ENCODE measurements at regions of chr16 and their contacts with region 1.

Region 1: GRCh38 chr16:11742539-11743307 is at the start of gene TXNDC11:
- DNase-seq: peak; percentile 99 to 100 (median 99)
- ATAC-seq: peak; percentile 96
- H3K4me3 ChIP-seq: peak within 1 kb of the TSS; percentile 63 to 78
- H3K4me3 Mint-ChIP-seq: peak within 1 kb of the TSS; percentile 95
- H3K27ac ChIP-seq: peak within 1 kb of the TSS; percentile 79 to 95
- H3K27ac Mint-ChIP-seq: peak within 1 kb of the TSS; percentile 98
- H3K4me1 ChIP-seq: peaks cover 30% of the 10 kb centered on the region
- H3K4me1 Mint-ChIP-seq: peaks cover 48% of the 10 kb centered on the region
- H3K27me3 ChIP-seq: no peaks in the 10 kb centered on the region
- H3K27me3 Mint-ChIP-seq: no peaks in the 10 kb centered on the region
- CTCF ChIP-seq: no peak
- total RNA-seq, gene TXNDC11: 118 to 130 TPM

Region 2: DNA sequence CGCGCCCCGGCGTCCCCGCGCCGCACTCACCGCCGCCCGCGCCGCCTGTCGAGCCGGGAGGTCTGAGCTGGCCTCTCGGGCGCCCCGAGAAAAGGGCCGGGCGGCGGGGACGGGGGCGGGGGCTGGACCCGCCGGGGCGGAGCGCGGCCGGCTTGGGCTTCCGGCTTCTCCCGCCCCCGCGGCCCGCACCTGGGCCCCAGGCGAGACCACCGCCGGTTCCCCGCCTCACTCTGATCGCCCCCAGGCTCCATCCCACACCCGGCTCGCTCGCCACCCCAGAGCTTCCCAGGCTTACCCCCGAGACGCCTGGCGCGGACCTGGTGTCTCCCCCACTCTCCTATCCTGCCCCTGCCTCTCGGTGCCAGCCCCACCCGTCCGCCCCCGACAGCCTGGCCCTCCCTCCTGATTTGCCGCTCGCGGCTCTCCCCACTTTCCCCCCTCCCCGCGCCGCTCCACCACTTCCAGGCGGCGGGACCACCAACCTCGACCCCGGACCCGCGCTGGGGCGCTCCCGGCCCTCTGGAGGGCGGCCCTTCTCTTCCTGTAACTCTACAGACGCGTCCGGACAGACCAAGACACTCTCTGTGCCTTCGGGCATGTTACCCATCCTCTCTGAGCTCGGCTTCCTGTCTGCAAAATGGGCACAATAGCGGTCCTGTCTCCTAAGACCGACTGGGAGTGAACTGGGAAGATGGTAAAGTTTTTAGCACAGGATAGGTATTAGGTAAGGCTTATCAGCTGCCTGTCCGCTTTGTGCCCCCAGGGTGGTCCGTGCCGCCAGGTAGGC is 155.7 kb before region 1 on chr16 and contains the start of gene LITAF:
- CTCF ChIA-PET with region 1: no interaction called
- POLR2A ChIA-PET with region 1: no interaction called
- intact Hi-C with region 1: loop called in 1 of 2 experiments (anchors 5 kb)
- DNase-seq: peak in 8 of 9 experiments; percentile 34 to 82 (median 67)
- ATAC-seq: peak; percentile 59
- H3K4me3 ChIP-seq: peak within 1 kb of the TSS; percentile 71 to 93
- H3K4me3 Mint-ChIP-seq: peak within 1 kb of the TSS; percentile 97
- H3K27ac ChIP-seq: peak within 1 kb of the TSS; percentile 72 to 89
- H3K27ac Mint-ChIP-seq: peak within 1 kb of the TSS; percentile 98
- H3K4me1 ChIP-seq: peaks cover 33% of the 10 kb centered on the region
- H3K4me1 Mint-ChIP-seq: peaks cover 41% of the 10 kb centered on the region
- H3K27me3 ChIP-seq: no peaks in the 10 kb centered on the region
- H3K27me3 Mint-ChIP-seq: no peaks in the 10 kb centered on the region
- CTCF ChIP-seq: no peak
- total RNA-seq, gene LITAF: 543 TPM

Region 3: DNA sequence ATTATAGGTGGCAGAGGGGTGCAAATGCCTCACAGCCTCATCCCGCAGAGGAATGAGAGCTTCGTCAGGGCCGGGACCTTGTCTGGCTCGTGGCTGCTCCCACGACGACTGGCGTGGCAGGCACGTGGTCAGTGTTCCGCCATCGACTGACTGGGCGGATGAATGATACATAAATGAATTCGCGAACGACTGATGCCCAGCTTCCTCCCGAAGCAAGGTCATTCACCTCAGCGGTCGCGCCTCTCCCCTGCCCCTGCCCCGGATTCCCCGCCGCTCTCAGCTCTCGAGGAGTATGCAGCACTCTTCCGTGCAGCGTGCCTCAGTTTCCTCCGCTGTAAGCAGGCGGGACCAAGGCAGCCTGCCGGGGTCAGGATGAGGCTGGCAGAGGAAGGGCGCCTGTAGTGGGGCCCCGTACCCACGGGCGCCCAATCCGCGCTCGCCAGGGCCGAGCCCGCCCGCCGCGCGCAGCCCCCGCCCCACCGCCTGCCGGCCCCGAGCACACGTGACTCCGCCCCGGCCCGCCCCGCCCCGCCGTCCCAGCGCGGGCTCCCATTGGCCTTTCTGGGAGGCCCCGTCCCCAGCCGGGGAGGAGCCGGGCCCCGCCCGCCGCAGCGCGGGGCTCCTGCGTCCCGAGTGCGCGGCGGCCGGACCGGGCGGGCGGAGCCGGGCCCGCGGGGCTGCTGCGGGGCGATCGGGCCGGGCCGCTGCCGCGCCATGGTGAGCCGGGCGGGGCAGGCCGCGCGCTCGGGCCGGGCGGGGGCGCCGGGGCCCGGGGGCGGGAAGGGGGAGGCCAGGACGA is 74.7 kb before region 1 on chr16 and contains the start of gene SNN:
- CTCF ChIA-PET with region 1: no interaction called
- POLR2A ChIA-PET with region 1: no interaction called
- intact Hi-C with region 1: loop called (anchors 2 to 5 kb)
- DNase-seq: peak; percentile 69 to 91 (median 83)
- ATAC-seq: peak; percentile 81
- H3K4me3 ChIP-seq: peak within 1 kb of the TSS; percentile 51 to 59
- H3K4me3 Mint-ChIP-seq: peak within 1 kb of the TSS; percentile 85
- H3K27ac ChIP-seq: peak within 1 kb of the TSS; percentile 62 to 70
- H3K27ac Mint-ChIP-seq: peak within 1 kb of the TSS; percentile 97
- H3K4me1 ChIP-seq: peaks cover 86% of the 10 kb centered on the region
- H3K4me1 Mint-ChIP-seq: peaks cover 78% of the 10 kb centered on the region
- H3K27me3 ChIP-seq: no peaks in the 10 kb centered on the region
- H3K27me3 Mint-ChIP-seq: no peaks in the 10 kb centered on the region
- CTCF ChIP-seq: no peak
- total RNA-seq, gene SNN: 105 to 107 TPM

Region 4: DNA sequence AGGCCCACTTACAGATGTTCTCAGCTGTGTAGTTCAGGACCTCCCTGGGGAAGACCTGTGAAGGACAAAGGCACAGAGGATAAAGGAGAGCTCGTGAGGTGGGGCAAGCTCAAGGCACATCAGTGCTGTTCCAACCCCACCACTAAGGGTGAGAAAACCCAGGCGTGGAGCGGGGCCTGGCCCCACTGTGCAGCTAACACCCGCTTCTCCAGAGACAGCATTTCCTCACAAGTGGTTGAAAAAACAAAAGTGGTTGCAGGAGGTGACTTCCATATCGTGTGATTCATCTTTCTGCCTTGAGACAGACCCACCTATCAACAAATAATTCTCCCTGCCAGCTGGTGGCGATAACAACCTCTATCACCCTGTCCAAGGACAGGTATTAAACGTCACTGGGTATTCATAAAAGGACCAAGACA is 44.4 kb before region 1 on chr16:
- CTCF ChIA-PET with region 1: no interaction called
- POLR2A ChIA-PET with region 1: no interaction called
- intact Hi-C with region 1: no loop called
- DNase-seq: peak in 2 of 9 experiments; percentile 46 to 75
- ATAC-seq: peak; percentile 63
- H3K4me3 ChIP-seq: no peak overlapping the region
- H3K4me3 Mint-ChIP-seq: no peak overlapping the region
- H3K27ac ChIP-seq: no peak overlapping the region
- H3K27ac Mint-ChIP-seq: peak overlapping the region; percentile 45
- H3K4me1 ChIP-seq: peaks cover 12% of the 10 kb centered on the region
- H3K4me1 Mint-ChIP-seq: peaks cover 36% of the 10 kb centered on the region
- H3K27me3 ChIP-seq: no peaks in the 10 kb centered on the region
- H3K27me3 Mint-ChIP-seq: no peaks in the 10 kb centered on the region
- CTCF ChIP-seq: no peak

Region 5: DNA sequence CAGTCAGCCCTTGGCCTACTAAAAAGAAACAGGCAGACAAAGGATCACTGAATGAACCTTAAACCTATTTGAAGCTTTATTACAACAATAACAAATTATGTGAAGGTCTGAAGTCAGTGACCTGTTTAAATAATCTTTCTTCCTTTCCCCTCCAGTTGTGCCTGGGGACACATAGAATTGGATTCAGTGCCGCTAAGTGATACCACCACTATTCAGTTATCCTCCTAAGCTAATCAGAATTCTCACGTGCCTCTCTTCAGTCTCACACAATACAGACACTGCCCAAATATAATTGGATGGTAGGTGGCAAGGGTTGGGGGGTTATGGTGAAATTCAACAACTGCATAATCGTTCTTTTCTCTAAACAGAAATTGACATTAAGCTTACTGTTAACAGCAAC is 11.5 kb before region 1 on chr16:
- CTCF ChIA-PET with region 1: no interaction called
- POLR2A ChIA-PET with region 1: interaction called, 21 read pairs
- intact Hi-C with region 1: no loop called
- DNase-seq: no peak
- ATAC-seq: no peak
- H3K4me3 ChIP-seq: no peak overlapping the region
- H3K4me3 Mint-ChIP-seq: no peak overlapping the region
- H3K27ac ChIP-seq: no peak overlapping the region
- H3K27ac Mint-ChIP-seq: no peak overlapping the region
- H3K4me1 ChIP-seq: no peaks in the 10 kb centered on the region
- H3K4me1 Mint-ChIP-seq: peaks cover 32% of the 10 kb centered on the region
- H3K27me3 ChIP-seq: no peaks in the 10 kb centered on the region
- H3K27me3 Mint-ChIP-seq: no peaks in the 10 kb centered on the region
- CTCF ChIP-seq: no peak

Region 6: DNA sequence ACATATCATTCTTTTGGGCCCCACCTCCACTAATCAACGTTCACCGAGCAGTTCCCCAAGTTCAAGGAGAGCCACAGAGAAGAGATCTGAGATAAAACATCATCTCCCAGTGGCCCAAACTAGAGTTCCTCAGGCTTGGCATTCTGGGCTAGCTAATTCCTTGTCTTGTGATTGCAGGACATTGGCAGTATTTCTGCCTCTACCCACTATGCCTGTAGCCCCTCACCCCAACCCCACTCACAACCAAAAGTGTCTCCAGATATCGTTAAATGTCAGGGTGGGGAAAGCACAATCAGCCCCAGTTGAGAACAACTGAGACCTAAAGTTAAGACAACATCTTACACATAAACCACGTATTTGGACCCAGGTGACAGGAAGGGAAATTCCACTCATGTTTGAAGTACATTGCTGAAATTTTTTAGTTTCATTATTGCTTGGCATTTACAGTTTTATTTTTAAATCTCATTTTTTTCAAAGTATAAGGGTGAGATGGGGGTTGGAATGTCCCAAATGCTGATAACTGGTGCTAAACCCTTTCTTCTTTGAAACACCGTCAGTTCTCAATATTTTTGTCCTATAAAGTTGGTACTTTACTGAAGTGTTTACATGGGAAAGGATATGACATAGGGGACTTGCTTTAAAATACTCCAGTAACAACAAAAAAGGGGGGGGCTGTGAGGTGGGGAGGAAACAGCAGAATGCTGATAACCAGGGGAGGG is 40.8 kb after region 1 on chr16:
- CTCF ChIA-PET with region 1: interaction called, 3 read pairs
- POLR2A ChIA-PET with region 1: interaction called, 5 read pairs
- intact Hi-C with region 1: loop called (anchors 1 to 5 kb)
- DNase-seq: peak in 6 of 9 experiments; percentile 17 to 93 (median 54)
- ATAC-seq: peak; percentile 81
- H3K4me3 ChIP-seq: peak overlapping the region; percentile 32 to 36
- H3K4me3 Mint-ChIP-seq: peak overlapping the region; percentile 78
- H3K27ac ChIP-seq: peak overlapping the region; percentile 82 to 96
- H3K27ac Mint-ChIP-seq: peak overlapping the region; percentile 99
- H3K4me1 ChIP-seq: peaks cover 51% of the 10 kb centered on the region
- H3K4me1 Mint-ChIP-seq: peaks cover 57% of the 10 kb centered on the region
- H3K27me3 ChIP-seq: no peaks in the 10 kb centered on the region
- H3K27me3 Mint-ChIP-seq: no peaks in the 10 kb centered on the region
- CTCF ChIP-seq: no peak

Region 7: GRCh38 chr16:11915644-11916523 is 173.2 kb after region 1 on chr16 and contains the start of gene GSPT1:
- CTCF ChIA-PET with region 1: no interaction called
- POLR2A ChIA-PET with region 1: no interaction called
- intact Hi-C with region 1: loop called (anchors 1 to 2 kb)
- DNase-seq: peak; percentile 98 to 100 (median 99)
- ATAC-seq: peak; percentile 89
- H3K4me3 ChIP-seq: peak within 1 kb of the TSS; percentile 52 to 68
- H3K4me3 Mint-ChIP-seq: peak within 1 kb of the TSS; percentile 94
- H3K27ac ChIP-seq: peak within 1 kb of the TSS; percentile 68 to 75
- H3K27ac Mint-ChIP-seq: peak within 1 kb of the TSS; percentile 98
- H3K4me1 ChIP-seq: peaks cover 24% of the 10 kb centered on the region
- H3K4me1 Mint-ChIP-seq: peaks cover 29% of the 10 kb centered on the region
- H3K27me3 ChIP-seq: no peaks in the 10 kb centered on the region
- H3K27me3 Mint-ChIP-seq: no peaks in the 10 kb centered on the region
- CTCF ChIP-seq: no peak
- total RNA-seq, gene GSPT1: 296 to 297 TPM

Region 8: GRCh38 chr16:12803203-12804097 is 1060.7 kb after region 1 on chr16 and contains the start of gene CPPED1:
- CTCF ChIA-PET with region 1: no interaction called
- POLR2A ChIA-PET with region 1: no interaction called
- intact Hi-C with region 1: loop called in 1 of 2 experiments (anchors 5 kb)
- DNase-seq: peak; percentile 83 to 95 (median 88)
- ATAC-seq: peak; percentile 94
- H3K4me3 ChIP-seq: peak within 1 kb of the TSS; percentile 71 to 86
- H3K4me3 Mint-ChIP-seq: peak within 1 kb of the TSS; percentile 88
- H3K27ac ChIP-seq: peak within 1 kb of the TSS; percentile 55 to 87
- H3K27ac Mint-ChIP-seq: peak within 1 kb of the TSS; percentile 92
- H3K4me1 ChIP-seq: peaks cover 9% of the 10 kb centered on the region
- H3K4me1 Mint-ChIP-seq: peaks cover 22% of the 10 kb centered on the region
- H3K27me3 ChIP-seq: no peaks in the 10 kb centered on the region
- H3K27me3 Mint-ChIP-seq: peaks cover 3% of the 10 kb centered on the region
- CTCF ChIP-seq: no peak
- total RNA-seq, gene CPPED1: 0.89 to 1.1 TPM